Activated naive CD4-positive, alpha-beta T cell treated with anti-CD3 and anti-CD28 coated beads for 36 hours (primary cell): ENCODE measurements at regions of chr3 and their contacts with region 1.

Region 1: GRCh38 chr3:46078712-46079400 is 51.6 kb upstream of the XCR1 start:
- DNase-seq: peak; percentile 97
- H3K4me3 Mint-ChIP-seq: no peak overlapping the region
- H3K27ac Mint-ChIP-seq: no peak overlapping the region
- H3K4me1 Mint-ChIP-seq: no peaks in the 10 kb centered on the region
- H3K27me3 Mint-ChIP-seq: peaks cover 14% of the 10 kb centered on the region

Region 2: GRCh38 chr3:45507820-45508317 is 571.0 kb before region 1 on chr3:
- CTCF ChIA-PET with region 1: interaction called, 7 read pairs
- intact Hi-C with region 1: loop called (anchors 5 kb)
- DNase-seq: no peak
- H3K4me3 Mint-ChIP-seq: no peak overlapping the region
- H3K27ac Mint-ChIP-seq: no peak overlapping the region
- H3K4me1 Mint-ChIP-seq: peaks cover 14% of the 10 kb centered on the region
- H3K27me3 Mint-ChIP-seq: no peaks in the 10 kb centered on the region

Region 3: GRCh38 chr3:45921062-45921848 is 157.6 kb before region 1 on chr3:
- CTCF ChIA-PET with region 1: interaction called, 14 read pairs
- intact Hi-C with region 1: no loop called
- DNase-seq: no peak
- H3K4me3 Mint-ChIP-seq: no peak overlapping the region
- H3K27ac Mint-ChIP-seq: no peak overlapping the region
- H3K4me1 Mint-ChIP-seq: peaks cover 13% of the 10 kb centered on the region
- H3K27me3 Mint-ChIP-seq: no peaks in the 10 kb centered on the region

Region 4: GRCh38 chr3:45968706-45969105 is 110.2 kb before region 1 on chr3:
- CTCF ChIA-PET with region 1: interaction called, 14 read pairs
- intact Hi-C with region 1: no loop called
- DNase-seq: no peak
- H3K4me3 Mint-ChIP-seq: no peak overlapping the region
- H3K27ac Mint-ChIP-seq: no peak overlapping the region
- H3K4me1 Mint-ChIP-seq: peaks cover 35% of the 10 kb centered on the region
- H3K27me3 Mint-ChIP-seq: no peaks in the 10 kb centered on the region

Region 5: DNA sequence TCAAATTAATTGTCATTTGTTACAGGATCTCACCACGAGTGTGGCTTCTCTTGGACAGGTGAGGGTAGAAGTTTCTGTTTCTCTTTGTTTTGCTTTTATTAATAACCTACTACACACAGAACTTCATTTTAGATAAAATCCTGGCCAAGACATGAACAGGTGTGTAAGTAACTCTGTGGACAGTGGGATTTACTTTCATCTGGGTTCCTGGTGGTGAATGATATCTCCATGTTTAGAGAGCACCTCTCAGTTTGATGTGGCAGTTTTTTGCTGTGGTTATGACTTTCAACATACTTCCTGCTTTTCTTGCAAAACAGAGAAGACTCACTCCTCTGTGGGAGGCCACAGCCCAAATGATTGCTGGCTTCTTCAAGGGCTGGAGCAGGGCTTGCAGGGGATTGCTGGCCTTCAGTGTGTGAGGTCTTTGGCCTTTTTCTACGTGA is 19.5 kb after region 1 on chr3:
- CTCF ChIA-PET with region 1: interaction called, 21 read pairs
- intact Hi-C with region 1: no loop called
- DNase-seq: peak; percentile 69
- H3K4me3 Mint-ChIP-seq: no peak overlapping the region
- H3K27ac Mint-ChIP-seq: peak overlapping the region; percentile 76
- H3K4me1 Mint-ChIP-seq: peaks cover 31% of the 10 kb centered on the region
- H3K27me3 Mint-ChIP-seq: peaks cover 20% of the 10 kb centered on the region

Region 6: GRCh38 chr3:46228259-46229242 is 149.7 kb after region 1 on chr3:
- CTCF ChIA-PET with region 1: no interaction called
- intact Hi-C with region 1: no loop called
- DNase-seq: no peak
- H3K4me3 Mint-ChIP-seq: no peak overlapping the region
- H3K27ac Mint-ChIP-seq: no peak overlapping the region
- H3K4me1 Mint-ChIP-seq: no peaks in the 10 kb centered on the region
- H3K27me3 Mint-ChIP-seq: peaks cover 7% of the 10 kb centered on the region